Left colon (tissue), 2 donors: ENCODE measurements at regions of chr6 and their contacts with region 1.

Region 1: GRCh38 chr6:75934643-75935472 is 137.6 kb downstream of the IMPG1 start:
- DNase-seq: peak in 1 of 2 donors; percentile 11
- ATAC-seq: peak; percentile 72

Region 2: DNA sequence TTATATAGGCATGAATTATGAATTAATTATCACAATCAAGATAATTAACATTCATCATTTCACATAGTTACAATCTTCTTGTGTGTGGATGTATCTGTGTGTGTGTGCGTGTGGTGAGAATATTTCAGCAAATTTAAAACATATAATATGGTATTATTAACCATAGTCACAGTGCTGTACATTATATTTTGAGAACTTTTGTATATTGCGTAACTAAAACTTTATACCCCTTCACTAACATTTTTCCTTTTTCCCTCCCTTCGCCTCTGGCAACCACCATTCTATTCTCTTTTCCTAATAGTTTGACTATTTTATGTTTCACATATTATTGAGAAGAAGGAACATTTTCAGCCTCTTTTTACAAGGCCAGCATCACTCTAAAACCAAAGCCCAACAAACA is 1351.7 kb after region 1 on chr6:
- intact Hi-C with region 1: no loop called
- DNase-seq: no peak
- ATAC-seq: no peak

Region 3: DNA sequence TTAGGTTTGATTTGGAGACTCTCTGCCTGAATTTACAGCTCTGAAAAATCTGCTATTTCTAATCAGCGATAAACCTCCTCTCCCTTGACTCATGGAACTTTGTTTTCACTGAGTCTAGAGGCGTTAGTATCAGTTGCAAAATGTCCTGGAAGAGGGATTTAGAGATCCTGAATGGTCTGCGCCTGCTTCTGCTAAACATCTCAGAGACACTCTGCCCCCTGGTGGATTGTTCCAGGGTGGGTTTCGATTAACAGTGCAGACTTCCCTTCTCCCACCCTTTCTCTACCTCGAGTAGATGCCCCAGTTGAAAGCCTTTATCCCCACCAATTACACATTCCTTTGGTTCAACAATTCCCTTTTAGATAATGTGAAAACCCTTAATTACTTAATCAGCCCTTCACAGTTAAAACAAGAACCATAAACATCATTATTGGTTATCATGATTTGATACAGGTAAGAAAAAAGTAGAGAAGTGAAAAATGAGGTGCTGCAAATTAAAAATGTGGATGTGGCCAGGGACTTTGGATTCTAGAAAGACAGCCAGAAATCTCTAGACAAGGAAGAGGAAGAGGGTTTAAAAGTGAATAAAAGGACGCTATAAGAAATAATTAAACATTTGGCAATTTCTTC is 1523.0 kb after region 1 on chr6:
- intact Hi-C with region 1: loop called in 1 of 2 experiments (anchors 10 kb)
- DNase-seq: peak in 1 of 2 donors; percentile 70
- ATAC-seq: peak; percentile 40